PC-9 (cell line): ENCODE measurements at regions of chr9 and their contacts with region 1.

Region 1: DNA sequence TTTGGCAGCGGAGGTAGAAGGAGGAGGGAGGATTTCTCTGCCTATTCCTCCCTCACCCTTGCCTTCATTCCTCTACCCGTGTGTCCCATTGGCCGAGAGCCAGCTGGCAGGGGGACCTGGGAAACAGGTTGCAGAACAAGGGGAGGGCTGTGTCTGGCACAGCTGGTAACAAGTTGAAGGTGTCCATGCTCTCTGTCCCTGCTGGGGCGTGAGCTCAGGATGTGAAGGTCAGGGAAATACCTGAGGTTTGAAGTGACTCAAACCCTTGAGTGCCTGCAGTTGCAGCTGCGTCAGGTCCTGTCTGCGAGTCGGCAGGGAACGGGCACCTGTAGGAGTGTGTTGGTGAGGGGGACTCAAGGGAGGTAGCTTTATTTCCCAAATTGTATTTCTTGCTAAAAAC is 16.2 kb downstream of the MIGA2 start:
- DNase-seq: peak; percentile 99 to 100
- H3K4me3 ChIP-seq: no peak overlapping the region; the same call in 1 of the 2 replicates
- H3K27ac ChIP-seq: peak overlapping the region; percentile 74
- H3K4me1 ChIP-seq: peaks cover 32% of the 10 kb centered on the region
- H3K27me3 ChIP-seq: no peaks in the 10 kb centered on the region
- CTCF ChIP-seq: no peak

Region 2: DNA sequence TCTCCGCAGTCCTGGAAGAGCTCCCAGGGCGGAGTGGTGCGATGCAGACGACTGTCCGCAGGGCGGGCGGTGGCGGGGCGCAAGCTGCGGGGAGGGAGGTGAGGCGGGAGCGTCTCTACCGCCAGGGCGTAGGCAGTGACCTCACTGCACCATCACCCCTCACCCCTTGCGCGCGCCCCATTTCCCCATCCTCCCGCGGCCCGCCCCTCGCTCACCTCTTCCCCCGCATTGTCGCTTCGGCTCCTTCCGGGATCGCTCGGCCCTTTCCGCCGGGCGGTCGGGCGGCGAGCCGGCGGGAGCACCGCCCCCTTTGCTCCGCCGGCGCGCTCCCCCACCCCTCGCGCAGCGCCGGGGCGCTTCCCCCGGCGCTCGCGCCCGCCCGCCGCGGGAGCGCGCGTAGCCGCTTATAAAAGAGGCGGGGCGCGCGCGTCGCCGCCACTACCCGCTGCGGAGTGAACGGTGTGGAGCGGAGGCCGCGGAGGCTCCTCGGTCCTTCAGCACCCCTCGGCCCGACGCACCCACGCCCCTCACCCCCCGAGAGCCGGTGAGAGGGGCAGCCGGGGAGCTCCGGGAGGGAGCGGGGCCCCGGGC is 500.3 kb before region 1 on chr9 and contains the start of gene SPTAN1:
- CTCF ChIA-PET with region 1: no interaction called
- POLR2A ChIA-PET with region 1: no interaction called
- intact Hi-C with region 1: loop called (anchors 10 kb)
- DNase-seq: peak; percentile 56 to 91
- H3K4me3 ChIP-seq: peak within 1 kb of the TSS; percentile 75
- H3K27ac ChIP-seq: peak within 1 kb of the TSS; percentile 32; the same call in 1 of the 2 replicates
- H3K4me1 ChIP-seq: peaks cover 39% of the 10 kb centered on the region
- H3K27me3 ChIP-seq: no peaks in the 10 kb centered on the region
- CTCF ChIP-seq: no peak
- total RNA-seq, gene SPTAN1: 214 and 239 TPM in 2 replicates

Region 3: GRCh38 chr9:129023036-129023907 is 29.3 kb before region 1 on chr9:
- CTCF ChIA-PET with region 1: interaction called, 15 read pairs
- POLR2A ChIA-PET with region 1: interaction called, 12 read pairs
- intact Hi-C with region 1: loop called (anchors 1 kb)
- DNase-seq: peak; percentile 85 to 92
- H3K4me3 ChIP-seq: no peak overlapping the region
- H3K27ac ChIP-seq: peak overlapping the region; percentile 51
- H3K4me1 ChIP-seq: peaks cover 51% of the 10 kb centered on the region
- H3K27me3 ChIP-seq: no peaks in the 10 kb centered on the region
- CTCF ChIP-seq: no peak

Region 4: GRCh38 chr9:129080602-129081387 is 28.2 kb after region 1 on chr9 and contains the start of gene DOLPP1:
- CTCF ChIA-PET with region 1: interaction called, 3 read pairs
- POLR2A ChIA-PET with region 1: interaction called, 8 read pairs
- intact Hi-C with region 1: loop called (anchors 1 kb)
- DNase-seq: peak; percentile 99 to 100
- H3K4me3 ChIP-seq: peak within 1 kb of the TSS; percentile 73
- H3K27ac ChIP-seq: no peak within 1 kb of the TSS
- H3K4me1 ChIP-seq: peaks cover 27% of the 10 kb centered on the region
- H3K27me3 ChIP-seq: no peaks in the 10 kb centered on the region
- CTCF ChIP-seq: no peak
- total RNA-seq, gene DOLPP1: 21.5 and 24.4 TPM in 2 replicates

Region 5: GRCh38 chr9:129110740-129111527 is 58.3 kb after region 1 on chr9 and contains the starts of genes CRAT and PTPA:
- CTCF ChIA-PET with region 1: no interaction called
- POLR2A ChIA-PET with region 1: no interaction called
- intact Hi-C with region 1: loop called (anchors 2 kb)
- DNase-seq: peak; percentile 78 to 96
- H3K4me3 ChIP-seq: peak within 1 kb of the TSS; percentile 93
- H3K27ac ChIP-seq: peak within 1 kb of the TSS; percentile 74
- H3K4me1 ChIP-seq: peaks cover 24% of the 10 kb centered on the region; the same call in 1 of the 2 replicates
- H3K27me3 ChIP-seq: no peaks in the 10 kb centered on the region
- CTCF ChIP-seq: no peak
- total RNA-seq, gene CRAT: 40.3 and 60.0 TPM in 2 replicates
- total RNA-seq, gene PTPA: 182 and 197 TPM in 2 replicates

Region 6: GRCh38 chr9:129121483-129121882 is 68.9 kb after region 1 on chr9:
- CTCF ChIA-PET with region 1: no interaction called
- POLR2A ChIA-PET with region 1: interaction called, 15 read pairs
- intact Hi-C with region 1: no loop called
- DNase-seq: no peak
- H3K4me3 ChIP-seq: no peak overlapping the region
- H3K27ac ChIP-seq: no peak overlapping the region
- H3K4me1 ChIP-seq: peaks cover 17% of the 10 kb centered on the region
- H3K27me3 ChIP-seq: no peaks in the 10 kb centered on the region
- CTCF ChIP-seq: no peak

Region 7: GRCh38 chr9:129307227-129307970 is 254.8 kb after region 1 on chr9:
- CTCF ChIA-PET with region 1: no interaction called
- POLR2A ChIA-PET with region 1: no interaction called
- intact Hi-C with region 1: no loop called
- DNase-seq: no peak
- H3K4me3 ChIP-seq: no peak overlapping the region
- H3K27ac ChIP-seq: no peak overlapping the region
- H3K4me1 ChIP-seq: no peaks in the 10 kb centered on the region
- H3K27me3 ChIP-seq: no peaks in the 10 kb centered on the region
- CTCF ChIP-seq: no peak